T-cell (primary cell): ENCODE measurements at regions of chr12 and their contacts with region 1.

Region 1: DNA sequence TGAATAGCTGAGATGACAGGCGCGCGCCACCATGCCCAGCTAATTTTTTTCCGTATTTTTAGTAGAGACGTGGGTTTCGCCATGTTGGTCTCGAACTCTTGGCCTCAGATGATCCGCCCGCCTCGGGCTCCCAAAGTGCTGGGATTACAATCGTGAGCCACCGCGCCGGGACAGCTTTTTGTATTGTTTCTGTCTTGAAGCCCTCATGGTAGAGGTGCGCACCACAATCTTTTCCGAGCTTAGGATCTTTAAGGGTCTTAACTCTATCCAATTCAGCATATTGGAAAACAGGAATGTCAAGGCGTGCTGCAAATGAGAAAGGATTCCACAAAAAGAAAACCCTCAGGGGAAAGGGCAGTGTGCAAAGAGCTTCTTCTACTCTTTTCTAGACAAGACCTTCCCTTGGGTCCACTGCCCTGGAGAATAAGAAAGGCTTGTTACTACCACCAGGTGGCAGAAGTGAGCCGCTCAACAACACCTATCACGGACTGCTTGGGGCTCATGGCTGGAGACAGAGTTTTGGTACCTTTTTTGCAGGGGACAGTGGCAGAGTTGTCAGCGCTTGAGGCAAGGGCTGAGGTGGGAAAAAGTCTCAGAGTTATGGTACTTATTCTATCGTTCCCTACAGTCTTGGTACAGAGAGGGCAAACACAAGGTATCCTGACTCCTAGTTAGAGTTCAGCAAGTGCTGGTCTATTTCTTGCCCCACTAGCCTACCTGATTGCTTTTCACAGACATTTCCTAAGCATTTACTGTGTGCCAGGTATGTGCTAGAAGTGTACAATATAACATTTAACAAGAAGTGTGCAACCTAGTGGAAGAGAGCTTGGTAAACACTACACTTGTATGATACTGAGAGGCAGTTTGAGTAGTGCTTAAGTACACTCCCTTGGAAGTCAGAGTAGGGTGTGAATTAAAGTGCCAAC is 16.4 kb upstream of the SP7 start:
- DNase-seq: peak; percentile 60 to 95 (median 78)
- ATAC-seq: peak; percentile 95 to 99 (median 98)
- H3K4me3 ChIP-seq: no peak overlapping the region
- H3K4me3 Mint-ChIP-seq: no peak overlapping the region
- H3K27ac ChIP-seq: no peak overlapping the region
- H3K27ac Mint-ChIP-seq: peak overlapping the region in 1 of 2 donors; percentile 47
- H3K4me1 ChIP-seq: peaks cover 0 to 6% of the 10 kb centered on the region in 2 experiments
- H3K4me1 Mint-ChIP-seq: peaks cover 6 to 7% (median 6%) of the 10 kb centered on the region in 3 donors
- H3K27me3 ChIP-seq: no peaks in the 10 kb centered on the region
- H3K27me3 Mint-ChIP-seq: no peaks in the 10 kb centered on the region

Region 2: GRCh38 chr12:53379389-53380103 is 27.0 kb after region 1 on chr12:
- CTCF ChIA-PET with region 1: interaction called, 9 to 24 read pairs
- POLR2A ChIA-PET with region 1: interaction called in 1 of 2 experiments, 10 read pairs
- DNase-seq: peak in 34 of 35 experiments; percentile 76 to 100 (median 98)
- ATAC-seq: peak; percentile 75 to 79 (median 76)
- H3K4me3 ChIP-seq: peak overlapping the region; percentile 51 to 65
- H3K4me3 Mint-ChIP-seq: no peak overlapping the region
- H3K27ac ChIP-seq: peak overlapping the region; percentile 64
- H3K27ac Mint-ChIP-seq: no peak overlapping the region
- H3K4me1 ChIP-seq: peaks cover 31 to 51% of the 10 kb centered on the region in 2 experiments
- H3K4me1 Mint-ChIP-seq: peaks cover 32 to 45% (median 38%) of the 10 kb centered on the region in 3 donors
- H3K27me3 ChIP-seq: no peaks in the 10 kb centered on the region
- H3K27me3 Mint-ChIP-seq: no peaks in the 10 kb centered on the region

Region 3: DNA sequence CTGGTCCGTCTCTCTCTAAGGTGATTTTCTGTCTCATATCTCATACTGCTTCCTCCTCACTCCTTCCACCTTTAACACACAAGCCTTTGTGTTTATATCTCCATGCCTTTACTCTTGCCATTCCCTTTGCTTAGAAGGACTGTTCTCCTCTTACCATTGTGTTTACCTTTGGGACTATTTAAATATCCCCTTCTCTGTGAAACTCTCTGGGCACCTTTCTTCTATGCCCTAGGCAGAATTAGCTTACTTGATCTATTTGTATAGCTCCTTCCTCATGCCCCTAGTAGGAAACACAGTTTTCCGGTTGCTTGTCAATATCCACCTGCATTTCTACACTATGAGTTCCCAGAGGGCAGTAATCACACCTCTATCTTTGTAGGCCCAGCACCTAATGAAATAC is 67.2 kb after region 1 on chr12:
- CTCF ChIA-PET with region 1: interaction called, 17 to 54 read pairs
- POLR2A ChIA-PET with region 1: no interaction called
- DNase-seq: no peak
- ATAC-seq: no peak
- H3K4me3 ChIP-seq: no peak overlapping the region
- H3K4me3 Mint-ChIP-seq: no peak overlapping the region
- H3K27ac ChIP-seq: no peak overlapping the region
- H3K27ac Mint-ChIP-seq: no peak overlapping the region
- H3K4me1 ChIP-seq: peaks cover 0 to 11% of the 10 kb centered on the region in 2 experiments
- H3K4me1 Mint-ChIP-seq: peaks cover 28 to 39% (median 32%) of the 10 kb centered on the region in 3 donors
- H3K27me3 ChIP-seq: no peaks in the 10 kb centered on the region
- H3K27me3 Mint-ChIP-seq: no peaks in the 10 kb centered on the region

Region 4: GRCh38 chr12:53508534-53509199 is 156.1 kb after region 1 on chr12:
- CTCF ChIA-PET with region 1: interaction called, 19 to 36 read pairs
- POLR2A ChIA-PET with region 1: interaction called in 1 of 2 experiments, 3 read pairs
- DNase-seq: peak; percentile 40 to 88 (median 73)
- ATAC-seq: peak; percentile 91 to 97 (median 96)
- H3K4me3 ChIP-seq: no peak overlapping the region
- H3K4me3 Mint-ChIP-seq: no peak overlapping the region
- H3K27ac ChIP-seq: peak overlapping the region; percentile 36
- H3K27ac Mint-ChIP-seq: peak overlapping the region; percentile 14 to 45
- H3K4me1 ChIP-seq: peaks cover 0 to 9% of the 10 kb centered on the region in 2 experiments
- H3K4me1 Mint-ChIP-seq: peaks cover 9 to 12% (median 11%) of the 10 kb centered on the region in 3 donors
- H3K27me3 ChIP-seq: no peaks in the 10 kb centered on the region
- H3K27me3 Mint-ChIP-seq: no peaks in the 10 kb centered on the region